Activated CD4-positive, alpha-beta T cell treated with anti-CD3 and anti-CD28 coated beads for 36 hours (primary cell): ENCODE measurements at regions of chr17 and their contacts with region 1.

Region 1: DNA sequence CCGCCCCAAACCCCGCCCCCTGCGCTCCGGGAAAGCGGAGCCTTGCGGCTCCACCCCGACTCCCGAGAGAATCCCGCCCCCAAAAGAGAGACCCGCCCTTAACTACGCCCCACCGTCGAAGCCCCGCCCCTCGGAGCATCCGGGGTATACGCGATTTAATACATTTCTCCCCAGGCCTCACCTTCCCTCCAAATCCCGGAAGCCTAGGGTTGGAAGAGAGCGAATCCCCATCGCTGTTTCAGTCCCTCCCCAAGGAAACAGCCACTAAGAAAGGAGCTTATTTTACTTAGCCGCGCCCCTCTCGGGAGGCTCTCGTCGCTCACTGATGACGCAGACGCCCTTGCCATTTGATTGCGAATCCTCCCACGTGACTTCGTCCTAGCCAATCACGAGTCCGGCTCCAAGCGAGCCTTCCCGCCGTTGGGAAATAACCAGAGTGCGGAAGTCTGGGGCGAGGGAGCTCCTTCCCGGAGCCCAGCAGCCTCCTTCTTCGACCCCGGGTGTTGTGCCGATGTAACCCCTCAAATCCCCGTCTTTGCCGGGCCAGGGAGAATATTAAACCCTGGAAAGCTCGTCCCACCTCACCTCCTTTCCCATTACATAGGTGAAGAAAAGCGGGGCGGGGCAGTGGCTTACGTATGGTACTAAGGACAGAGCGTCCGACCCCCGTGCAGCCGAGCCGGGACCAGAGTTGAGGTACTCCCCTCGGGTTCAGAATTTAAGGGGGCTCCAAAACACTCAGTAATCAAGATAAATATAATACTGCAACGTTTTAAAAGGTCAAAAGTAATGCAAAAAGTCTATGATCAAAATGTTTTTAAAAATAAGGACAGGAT is 462 bp upstream of the FDXR start:
- DNase-seq: peak; percentile 100
- ATAC-seq: peak; percentile 97
- H3K4me3 Mint-ChIP-seq: peak overlapping the region; percentile 88
- H3K27ac Mint-ChIP-seq: peak overlapping the region; percentile 98
- H3K4me1 Mint-ChIP-seq: peaks cover 22% of the 10 kb centered on the region
- H3K27me3 Mint-ChIP-seq: no peaks in the 10 kb centered on the region

Region 2: DNA sequence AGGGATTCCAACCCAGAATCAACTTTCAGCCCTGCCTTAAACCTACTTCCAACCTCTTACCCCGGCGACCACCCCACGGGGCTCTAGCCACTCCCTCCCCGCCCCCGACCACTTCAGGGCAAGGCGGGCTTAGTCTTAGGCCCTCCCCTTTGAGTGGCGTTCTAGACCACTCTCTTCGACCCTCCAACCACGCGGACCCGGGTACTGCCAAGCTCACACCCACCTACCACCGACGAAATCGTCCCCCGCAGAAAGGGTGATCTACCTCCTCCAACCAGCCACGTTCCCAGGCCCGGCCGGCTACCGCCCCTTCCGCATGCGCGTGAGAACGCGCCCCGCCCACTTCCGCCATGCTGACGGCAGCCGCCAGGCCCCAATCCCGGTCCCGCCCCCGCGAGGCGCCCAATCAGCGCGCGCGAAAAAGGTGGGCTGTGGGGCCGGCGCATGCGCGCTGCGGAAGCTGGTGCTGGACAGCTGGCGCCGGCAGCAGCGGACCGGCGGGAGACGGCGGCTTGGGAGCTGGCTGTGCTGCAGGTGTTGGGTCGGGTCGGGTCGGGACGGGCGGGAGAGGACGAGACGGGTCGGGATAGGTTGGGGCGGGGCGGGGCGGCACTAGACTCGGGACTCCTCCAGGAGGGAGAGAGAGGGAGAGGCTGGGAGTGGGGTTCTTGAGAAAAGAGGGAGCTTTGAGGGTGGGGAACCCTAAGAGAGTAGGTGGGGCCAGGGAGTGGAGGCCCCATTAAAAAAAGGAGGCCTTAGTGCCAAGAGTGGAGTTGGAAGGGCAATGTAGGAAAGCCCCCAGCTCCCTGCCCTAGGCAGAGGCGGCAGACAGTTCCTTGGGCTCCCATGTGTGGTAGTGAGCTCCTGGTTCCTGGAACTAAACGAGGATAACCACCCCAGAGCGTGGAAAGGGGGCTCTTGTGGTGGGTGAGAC is 96.9 kb before region 1 on chr17 and contains the start of gene NAT9:
- CTCF ChIA-PET with region 1: interaction called, 5 read pairs
- POLR2A ChIA-PET with region 1: interaction called, 4 read pairs
- intact Hi-C with region 1: loop called in 1 of 2 experiments (anchors 1 kb)
- DNase-seq: peak; percentile 100
- ATAC-seq: peak; percentile 76
- H3K4me3 Mint-ChIP-seq: peak within 1 kb of the TSS; percentile 98
- H3K27ac Mint-ChIP-seq: peak within 1 kb of the TSS; percentile 94
- H3K4me1 Mint-ChIP-seq: peaks cover 59% of the 10 kb centered on the region
- H3K27me3 Mint-ChIP-seq: no peaks in the 10 kb centered on the region
- total RNA-seq, gene NAT9: 23.7 to 39.6 TPM

Region 3: DNA sequence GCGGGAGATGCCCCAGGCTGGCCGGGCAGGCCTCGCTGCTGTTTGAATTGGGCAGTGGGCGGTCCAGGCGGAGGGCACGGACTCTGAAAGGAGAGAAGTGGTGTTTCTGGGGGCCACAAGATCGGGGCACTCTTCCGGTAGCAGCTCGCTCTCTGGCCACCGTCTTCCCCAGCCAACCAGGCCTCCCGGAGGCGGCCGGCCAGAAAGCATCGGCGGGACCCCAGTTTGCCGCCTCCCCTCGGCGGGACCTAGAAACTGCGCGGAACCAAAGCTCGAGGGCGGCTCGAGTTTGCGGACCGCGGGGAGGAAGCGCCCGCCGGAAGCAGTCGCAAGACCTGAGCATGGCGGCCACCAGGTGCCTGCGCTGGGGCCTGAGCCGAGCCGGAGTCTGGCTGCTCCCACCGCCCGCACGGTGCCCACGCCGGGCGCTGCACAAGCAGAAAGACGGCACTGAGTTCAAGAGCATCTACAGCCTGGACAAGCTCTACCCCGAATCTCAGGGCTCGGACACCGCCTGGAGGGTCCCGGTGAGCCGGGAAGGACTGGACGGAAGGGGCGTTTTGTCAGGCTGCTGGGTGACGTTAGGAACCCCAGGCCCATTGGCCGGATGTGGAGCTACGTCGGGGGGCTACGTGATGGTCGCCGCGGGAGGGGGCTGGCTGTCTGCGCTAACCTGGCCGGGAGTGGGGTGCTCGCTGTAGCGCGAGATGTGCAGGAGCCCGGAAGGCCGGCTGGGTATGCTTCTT is 139.3 kb after region 1 on chr17 and contains the start of gene MRPL58:
- CTCF ChIA-PET with region 1: interaction called, 3 read pairs
- POLR2A ChIA-PET with region 1: no interaction called
- intact Hi-C with region 1: loop called in 1 of 2 experiments (anchors 1 kb)
- DNase-seq: peak; percentile 91
- ATAC-seq: peak; percentile 96
- H3K4me3 Mint-ChIP-seq: peak within 1 kb of the TSS; percentile 95
- H3K27ac Mint-ChIP-seq: peak within 1 kb of the TSS; percentile 92
- H3K4me1 Mint-ChIP-seq: peaks cover 31% of the 10 kb centered on the region
- H3K27me3 Mint-ChIP-seq: no peaks in the 10 kb centered on the region
- total RNA-seq, gene MRPL58: 64.6 to 66.5 TPM

Region 4: DNA sequence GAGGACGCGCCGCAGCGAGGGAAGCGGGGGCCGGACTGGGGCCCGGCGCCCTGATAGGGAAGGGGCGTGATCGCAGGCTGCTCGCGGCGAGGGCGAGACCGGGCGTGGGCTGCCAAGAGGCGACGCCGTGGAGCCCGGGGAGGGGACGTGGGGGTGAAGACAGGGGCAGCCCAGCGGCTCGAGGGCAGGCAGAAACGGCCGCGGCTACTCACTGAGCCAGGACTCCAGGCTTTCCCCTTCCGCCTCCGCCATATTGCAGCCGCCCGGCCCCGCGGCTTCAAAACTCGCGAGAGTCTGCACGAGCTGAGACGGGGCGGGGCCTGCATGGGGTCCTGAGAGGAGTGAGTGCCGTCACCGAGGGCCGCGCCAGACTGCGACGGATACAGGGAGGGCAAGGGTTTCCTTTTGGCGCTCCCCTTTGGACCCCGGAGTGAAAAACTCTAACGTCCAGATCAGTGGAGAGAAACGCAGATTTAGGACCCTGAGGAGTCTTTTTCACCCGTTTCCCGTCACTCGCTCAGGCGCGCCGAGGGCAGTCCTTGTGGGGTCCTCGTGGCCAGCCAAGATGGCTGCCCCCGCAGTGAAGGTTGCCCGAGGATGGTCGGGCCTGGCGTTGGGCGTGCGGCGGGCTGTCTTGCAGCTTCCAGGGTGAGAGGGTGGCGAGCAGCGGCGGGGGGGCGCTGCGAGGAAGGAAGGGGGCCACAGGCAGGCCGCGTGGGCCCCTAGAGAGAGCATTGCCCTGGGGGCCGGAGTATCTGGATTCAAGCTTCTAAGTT is 388.3 kb after region 1 on chr17 and contains the starts of genes GGA3 and MRPS7:
- CTCF ChIA-PET with region 1: no interaction called
- POLR2A ChIA-PET with region 1: no interaction called
- intact Hi-C with region 1: loop called in 1 of 2 experiments (anchors 1 kb)
- DNase-seq: peak; percentile 98
- ATAC-seq: peak; percentile 91
- H3K4me3 Mint-ChIP-seq: peak within 1 kb of the TSS; percentile 88
- H3K27ac Mint-ChIP-seq: peak within 1 kb of the TSS; percentile 96
- H3K4me1 Mint-ChIP-seq: peaks cover 48% of the 10 kb centered on the region
- H3K27me3 Mint-ChIP-seq: no peaks in the 10 kb centered on the region
- total RNA-seq, gene GGA3: 72.9 to 76.7 TPM
- total RNA-seq, gene MRPS7: 51.4 to 63.8 TPM

Region 5: GRCh38 chr17:75456417-75457046 is 583.3 kb after region 1 on chr17 and contains the start of gene TMEM94:
- CTCF ChIA-PET with region 1: no interaction called
- POLR2A ChIA-PET with region 1: no interaction called
- intact Hi-C with region 1: loop called in 1 of 2 experiments (anchors 1 kb)
- DNase-seq: peak; percentile 95
- ATAC-seq: peak; percentile 99
- H3K4me3 Mint-ChIP-seq: peak within 1 kb of the TSS; percentile 89
- H3K27ac Mint-ChIP-seq: peak within 1 kb of the TSS; percentile 92
- H3K4me1 Mint-ChIP-seq: peaks cover 24% of the 10 kb centered on the region
- H3K27me3 Mint-ChIP-seq: no peaks in the 10 kb centered on the region
- total RNA-seq, gene TMEM94: 51.4 to 62.5 TPM

Region 6: GRCh38 chr17:75784473-75785015 is 911.3 kb after region 1 on chr17 and contains the start of gene UNK:
- CTCF ChIA-PET with region 1: no interaction called
- POLR2A ChIA-PET with region 1: no interaction called
- intact Hi-C with region 1: loop called in 1 of 2 experiments (anchors 5 kb)
- DNase-seq: peak; percentile 97
- ATAC-seq: peak; percentile 67
- H3K4me3 Mint-ChIP-seq: peak within 1 kb of the TSS; percentile 91
- H3K27ac Mint-ChIP-seq: peak within 1 kb of the TSS; percentile 100
- H3K4me1 Mint-ChIP-seq: peaks cover 55% of the 10 kb centered on the region
- H3K27me3 Mint-ChIP-seq: peaks cover 1% of the 10 kb centered on the region
- total RNA-seq, gene UNK: 24.5 to 33.7 TPM